Activated T-helper 1 cell treated with anti-CD3 and anti-CD28 coated beads, Interleukin-12 subunit alpha, Interleukin-12 subunit beta, Interleukin-2, Interleukin-4 antibody, amounts not matched to agents 30 ng/mL and 10 ng/mL and 1 ng/mL, durations not matched to agents 14 hours and 24 hours and 36 hours (primary cell): ENCODE measurements at regions of chr11 and their contacts with region 1.

Region 1: GRCh38 chr11:86511086-86511551 is 136.4 kb downstream of the CCDC81 start:
- DNase-seq: no peak
- H3K4me3 Mint-ChIP-seq: no peak overlapping the region
- H3K27ac Mint-ChIP-seq: no peak overlapping the region
- H3K4me1 Mint-ChIP-seq: no peaks in the 10 kb centered on the region
- H3K27me3 Mint-ChIP-seq: no peaks in the 10 kb centered on the region

Region 2: GRCh38 chr11:86447763-86448480 is 63.2 kb before region 1 on chr11:
- intact Hi-C with region 1: loop called (anchors 2 kb)
- DNase-seq: peak; percentile 31
- H3K4me3 Mint-ChIP-seq: peak overlapping the region; percentile 48
- H3K27ac Mint-ChIP-seq: no peak overlapping the region
- H3K4me1 Mint-ChIP-seq: peaks cover 43% of the 10 kb centered on the region
- H3K27me3 Mint-ChIP-seq: no peaks in the 10 kb centered on the region

Region 3: GRCh38 chr11:86523738-86524619 is 12.9 kb after region 1 on chr11:
- intact Hi-C with region 1: loop called (anchors 1 kb)
- DNase-seq: no peak
- H3K4me3 Mint-ChIP-seq: peak overlapping the region; percentile 56
- H3K27ac Mint-ChIP-seq: peak overlapping the region; percentile 90
- H3K4me1 Mint-ChIP-seq: peaks cover 36% of the 10 kb centered on the region
- H3K27me3 Mint-ChIP-seq: peaks cover 2% of the 10 kb centered on the region

Region 4: DNA sequence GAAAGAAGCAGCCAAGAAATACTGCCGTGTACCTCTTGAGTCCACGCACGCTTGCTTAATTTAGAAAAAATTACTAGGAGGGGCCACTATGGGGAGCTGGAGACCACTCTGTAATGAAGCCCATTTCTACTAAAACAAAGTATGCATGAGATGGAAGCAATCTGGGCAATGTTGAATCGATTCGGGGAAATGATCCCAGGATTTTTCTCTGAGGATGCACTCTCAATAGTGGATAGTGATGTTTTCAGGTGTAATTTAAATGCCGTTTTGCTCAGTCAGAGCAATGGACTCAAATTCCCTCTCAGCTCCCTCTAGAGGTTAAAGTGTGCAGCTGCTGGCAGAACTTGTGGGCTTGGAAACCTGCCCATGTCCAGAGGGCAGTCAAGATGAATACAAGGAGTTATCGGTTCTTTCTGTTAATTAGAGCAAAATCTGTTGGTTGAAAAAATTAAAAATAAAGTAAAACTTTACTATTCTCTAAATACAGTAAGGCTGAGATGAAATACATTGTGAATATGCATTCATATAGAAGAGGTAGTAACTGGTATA is 97.2 kb after region 1 on chr11:
- intact Hi-C with region 1: loop called (anchors 1 kb)
- DNase-seq: peak; percentile 22
- H3K4me3 Mint-ChIP-seq: no peak overlapping the region
- H3K27ac Mint-ChIP-seq: no peak overlapping the region
- H3K4me1 Mint-ChIP-seq: peaks cover 30% of the 10 kb centered on the region
- H3K27me3 Mint-ChIP-seq: peaks cover 3% of the 10 kb centered on the region

Region 5: DNA sequence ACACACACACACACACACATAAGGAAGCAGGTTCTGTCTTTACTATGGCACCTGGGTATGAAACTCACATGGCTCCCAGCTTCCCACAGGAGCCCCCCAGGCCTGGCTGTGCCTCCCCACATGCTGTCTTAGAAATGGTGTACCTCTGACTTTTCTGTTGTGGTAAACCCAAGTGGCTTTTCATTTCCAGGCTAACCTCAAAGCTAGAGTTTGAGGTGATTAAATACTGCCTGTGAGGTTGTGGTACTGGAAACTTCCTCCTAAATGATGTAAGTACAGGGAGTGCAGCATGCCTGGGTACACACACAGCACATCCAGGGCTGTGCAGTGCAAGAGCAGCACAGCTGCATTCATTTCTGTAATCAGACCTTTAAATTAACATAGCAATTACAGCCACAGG is 126.9 kb after region 1 on chr11:
- intact Hi-C with region 1: loop called (anchors 1 kb)
- DNase-seq: peak; percentile 40
- H3K4me3 Mint-ChIP-seq: no peak overlapping the region
- H3K27ac Mint-ChIP-seq: peak overlapping the region; percentile 33
- H3K4me1 Mint-ChIP-seq: peaks cover 51% of the 10 kb centered on the region
- H3K27me3 Mint-ChIP-seq: peaks cover 20% of the 10 kb centered on the region